Activated CD4-positive, alpha-beta memory T cell treated with anti-CD3 and anti-CD28 coated beads, Interleukin-2, amount 10 ng/mL, durations not matched to agents 7 days and 5 days (primary cell): ENCODE measurements at regions of chr6 and their contacts with region 1.

Region 1: DNA sequence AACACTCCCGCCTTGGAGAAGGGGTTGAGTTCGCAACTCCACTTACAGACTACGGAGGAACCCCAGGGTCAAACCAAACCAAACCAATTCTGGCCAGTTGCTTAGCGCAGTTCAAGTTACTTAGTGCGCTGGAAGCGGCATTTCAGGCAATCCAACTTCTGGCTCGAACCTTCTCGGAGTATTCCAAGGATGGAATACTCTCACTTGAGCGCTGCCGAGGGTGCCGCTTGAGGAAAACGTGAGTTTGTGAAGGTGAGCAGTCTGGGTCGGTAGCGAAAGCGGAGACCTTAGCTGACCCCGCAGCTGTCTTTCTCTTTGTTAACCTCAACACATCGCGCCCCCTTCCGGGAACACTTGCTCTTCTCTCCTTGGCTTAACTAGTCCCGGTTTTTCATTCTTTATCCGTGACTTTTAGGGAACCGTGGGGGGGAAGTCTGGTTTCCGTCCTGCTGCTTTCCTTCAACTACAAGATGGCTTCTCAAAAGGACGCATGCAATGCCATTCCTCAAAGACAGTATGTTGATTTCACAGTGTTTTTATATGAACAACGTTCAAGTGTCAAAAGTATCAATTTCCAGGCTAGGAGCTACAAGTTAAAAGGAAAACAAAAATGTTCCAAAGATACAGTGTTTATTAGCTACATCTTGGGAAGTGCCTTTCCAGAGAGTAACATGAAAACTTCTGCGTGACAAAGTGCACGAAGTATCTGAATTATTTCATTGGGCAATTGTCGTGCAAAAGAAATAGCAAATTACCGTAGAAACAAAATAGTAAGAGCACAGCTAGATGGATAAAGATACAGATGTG is 742 bp upstream of the PNISR start:
- DNase-seq: peak; percentile 66
- H3K4me3 Mint-ChIP-seq: peak overlapping the region; percentile 87
- H3K27ac Mint-ChIP-seq: peak overlapping the region; percentile 99
- H3K4me1 Mint-ChIP-seq: peaks cover 56% of the 10 kb centered on the region
- H3K27me3 Mint-ChIP-seq: no peaks in the 10 kb centered on the region

Region 2: DNA sequence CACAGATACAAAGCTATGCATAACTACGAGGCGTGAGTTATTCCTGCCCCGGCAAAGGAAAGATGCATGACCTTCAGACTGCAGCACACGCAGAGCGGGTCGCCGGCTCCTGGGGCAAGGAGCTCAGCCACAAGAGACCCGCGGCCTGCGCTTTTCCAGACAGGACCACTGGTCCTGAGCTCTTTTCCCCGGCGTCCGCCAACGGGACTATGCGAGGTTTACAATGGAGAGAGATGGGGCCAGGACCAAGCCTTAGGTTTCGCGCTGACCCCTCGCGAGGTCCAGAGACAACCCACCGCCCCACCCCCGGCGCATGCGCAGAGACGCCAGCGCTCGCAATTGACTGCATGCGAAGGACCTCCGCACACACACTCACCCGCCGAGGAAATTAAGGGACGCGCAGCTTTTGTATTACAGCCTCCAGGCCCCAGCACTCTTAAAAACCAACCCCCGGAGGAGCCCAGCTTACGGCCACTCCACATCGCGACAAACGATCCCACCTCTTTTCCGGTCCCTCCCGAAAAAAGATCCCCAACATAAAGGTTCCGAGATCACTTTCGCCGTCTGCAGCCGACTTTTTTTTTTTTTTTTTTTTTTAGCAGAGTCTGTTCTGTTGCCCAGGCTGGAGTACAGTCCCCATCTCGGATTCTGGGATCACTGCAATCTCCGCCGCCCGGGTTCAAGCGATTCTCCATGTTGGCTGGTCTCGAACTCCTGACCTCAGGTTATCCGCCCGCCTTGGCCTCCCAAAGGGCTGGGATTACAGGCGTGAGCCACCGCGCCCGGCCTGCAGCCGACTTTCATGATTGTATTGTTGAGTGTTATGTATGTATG is 31.9 kb before region 1 on chr6 and contains the start of gene COQ3:
- CTCF ChIA-PET with region 1: interaction called, 5 read pairs
- POLR2A ChIA-PET with region 1: interaction called, 46 read pairs
- DNase-seq: peak; percentile 71
- H3K4me3 Mint-ChIP-seq: peak within 1 kb of the TSS; percentile 91
- H3K27ac Mint-ChIP-seq: peak within 1 kb of the TSS; percentile 69
- H3K4me1 Mint-ChIP-seq: peaks cover 16% of the 10 kb centered on the region
- H3K27me3 Mint-ChIP-seq: no peaks in the 10 kb centered on the region
- total RNA-seq, gene COQ3: 6.6 to 7.5 TPM

Region 3: DNA sequence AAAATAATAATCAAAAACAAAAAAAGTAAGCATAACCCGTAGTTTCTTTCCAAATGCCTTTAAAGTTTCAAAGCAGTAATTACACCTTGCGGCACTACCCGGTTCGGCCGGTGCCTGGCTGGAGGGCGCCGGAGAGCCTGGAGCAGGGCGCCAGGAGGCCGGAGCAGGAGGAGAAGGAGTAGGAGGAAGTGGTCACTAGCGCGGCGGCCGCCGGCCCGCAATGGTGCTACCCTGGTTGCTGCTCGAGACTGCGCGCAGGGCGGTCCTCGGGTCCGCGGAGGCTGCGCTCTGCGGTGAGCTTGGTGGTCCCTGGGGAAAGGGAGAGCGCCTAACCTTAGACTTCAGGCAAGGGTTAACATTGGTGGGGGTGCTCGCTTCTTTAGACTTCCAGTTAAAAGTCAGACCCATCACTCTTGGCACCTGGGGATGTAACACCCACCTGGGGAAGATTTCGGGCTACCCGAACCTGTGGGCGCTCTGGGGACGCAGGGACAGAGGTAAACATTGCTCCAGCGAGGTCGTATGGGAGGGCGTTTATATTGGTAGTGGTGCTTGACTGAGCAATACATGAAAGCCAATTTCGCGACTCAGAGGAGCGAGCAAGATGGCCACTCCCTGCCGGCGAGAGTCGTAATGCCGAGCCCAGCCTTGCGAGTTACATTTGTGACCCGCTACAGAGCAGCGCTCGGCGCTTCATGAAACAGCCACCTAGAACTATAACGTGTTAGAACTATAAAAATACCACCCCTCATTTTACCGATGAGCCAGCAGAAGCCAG is 95.2 kb after region 1 on chr6:
- CTCF ChIA-PET with region 1: interaction called, 3 read pairs
- POLR2A ChIA-PET with region 1: interaction called, 10 read pairs
- DNase-seq: peak; percentile 80
- H3K4me3 Mint-ChIP-seq: peak overlapping the region; percentile 88
- H3K27ac Mint-ChIP-seq: peak overlapping the region; percentile 85
- H3K4me1 Mint-ChIP-seq: peaks cover 30% of the 10 kb centered on the region
- H3K27me3 Mint-ChIP-seq: peaks cover 9% of the 10 kb centered on the region

Region 4: DNA sequence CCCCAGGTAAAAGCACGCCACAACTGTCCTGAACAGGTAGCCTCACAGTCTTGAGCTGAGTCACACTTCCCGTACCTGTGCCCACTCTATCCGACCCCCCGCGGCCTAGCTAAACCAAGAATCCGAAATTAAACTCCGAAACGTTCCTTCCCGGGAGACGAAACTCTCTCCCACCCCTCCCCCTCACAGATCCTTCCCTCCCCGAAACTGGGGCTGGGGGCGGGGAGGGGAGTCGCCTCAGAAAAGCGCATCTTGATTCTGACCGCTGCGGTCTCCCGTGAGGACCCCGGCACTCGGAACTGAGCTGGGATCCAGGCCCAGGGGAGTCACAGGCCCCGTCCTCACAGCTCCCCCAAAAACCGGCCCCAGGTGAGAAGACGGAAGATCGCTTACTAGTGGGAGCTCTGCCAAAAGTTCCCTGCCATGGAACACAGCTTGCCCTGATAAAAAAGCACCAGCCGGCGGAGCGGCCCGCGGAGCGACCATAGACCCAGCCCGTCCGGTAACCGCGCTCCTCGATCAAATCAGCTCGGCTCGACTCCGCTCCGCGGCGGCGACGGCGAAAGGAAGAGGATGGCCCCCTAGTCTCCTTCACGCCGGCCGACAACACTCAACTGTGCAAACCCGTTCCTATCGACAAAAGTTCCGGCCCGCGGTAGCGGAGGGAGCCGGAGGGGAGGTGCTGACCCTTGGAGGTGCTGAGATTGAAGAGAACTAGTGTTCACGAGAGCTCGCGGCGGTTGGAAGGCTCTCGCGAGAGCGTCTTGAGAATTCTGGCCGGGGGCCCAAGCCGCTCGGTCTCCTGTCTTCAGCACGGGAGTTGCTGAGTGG is 142.5 kb after region 1 on chr6 and contains the start of gene CCNC:
- CTCF ChIA-PET with region 1: interaction called, 4 read pairs
- POLR2A ChIA-PET with region 1: interaction called, 10 read pairs
- DNase-seq: peak; percentile 90
- H3K4me3 Mint-ChIP-seq: peak within 1 kb of the TSS; percentile 98
- H3K27ac Mint-ChIP-seq: peak within 1 kb of the TSS; percentile 89
- H3K4me1 Mint-ChIP-seq: peaks cover 27% of the 10 kb centered on the region
- H3K27me3 Mint-ChIP-seq: no peaks in the 10 kb centered on the region
- total RNA-seq, gene CCNC: 41.5 to 45.4 TPM

Region 5: GRCh38 chr6:100549406-100550167 is 1123.7 kb after region 1 on chr6:
- CTCF ChIA-PET with region 1: no interaction called
- POLR2A ChIA-PET with region 1: no interaction called
- DNase-seq: no peak
- H3K4me3 Mint-ChIP-seq: no peak overlapping the region
- H3K27ac Mint-ChIP-seq: no peak overlapping the region
- H3K4me1 Mint-ChIP-seq: no peaks in the 10 kb centered on the region
- H3K27me3 Mint-ChIP-seq: no peaks in the 10 kb centered on the region